HepG2 (cell line): ENCODE measurements at regions of chr1 and their contacts with region 1.

Region 1: DNA sequence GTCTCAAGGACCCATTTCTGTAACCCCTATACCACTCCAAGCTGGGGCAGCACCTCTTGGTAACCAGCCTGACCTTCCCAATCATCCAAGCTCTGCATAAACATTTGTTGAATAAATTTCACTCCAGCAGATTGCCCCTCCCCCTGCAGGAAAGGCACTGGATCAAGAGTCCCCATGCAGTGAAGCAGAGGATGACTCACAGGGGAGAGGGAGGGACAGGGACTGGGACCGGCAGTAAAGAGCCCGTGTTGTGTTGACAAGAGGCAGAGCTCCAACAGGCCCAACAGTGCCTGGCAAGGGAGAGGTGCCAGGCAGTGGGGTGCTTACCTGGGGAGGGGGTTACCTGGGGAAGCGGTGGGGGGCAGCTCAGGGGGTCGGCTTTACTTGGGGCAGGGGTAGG is 32.3 kb downstream of the SLC9A1 start:
- DNase-seq: peak; percentile 86
- ATAC-seq: peak; percentile 97
- H3K4me3 ChIP-seq: no peak overlapping the region
- H3K27ac ChIP-seq: no peak overlapping the region
- H3K4me1 ChIP-seq: peaks cover 14% of the 10 kb centered on the region
- H3K27me3 ChIP-seq: no peaks in the 10 kb centered on the region
- CTCF ChIP-seq: no peak
- EP300 ChIP-seq: no peak
- POLR2A ChIP-seq: no peak
- RAD21 ChIP-seq: no peak

Region 2: DNA sequence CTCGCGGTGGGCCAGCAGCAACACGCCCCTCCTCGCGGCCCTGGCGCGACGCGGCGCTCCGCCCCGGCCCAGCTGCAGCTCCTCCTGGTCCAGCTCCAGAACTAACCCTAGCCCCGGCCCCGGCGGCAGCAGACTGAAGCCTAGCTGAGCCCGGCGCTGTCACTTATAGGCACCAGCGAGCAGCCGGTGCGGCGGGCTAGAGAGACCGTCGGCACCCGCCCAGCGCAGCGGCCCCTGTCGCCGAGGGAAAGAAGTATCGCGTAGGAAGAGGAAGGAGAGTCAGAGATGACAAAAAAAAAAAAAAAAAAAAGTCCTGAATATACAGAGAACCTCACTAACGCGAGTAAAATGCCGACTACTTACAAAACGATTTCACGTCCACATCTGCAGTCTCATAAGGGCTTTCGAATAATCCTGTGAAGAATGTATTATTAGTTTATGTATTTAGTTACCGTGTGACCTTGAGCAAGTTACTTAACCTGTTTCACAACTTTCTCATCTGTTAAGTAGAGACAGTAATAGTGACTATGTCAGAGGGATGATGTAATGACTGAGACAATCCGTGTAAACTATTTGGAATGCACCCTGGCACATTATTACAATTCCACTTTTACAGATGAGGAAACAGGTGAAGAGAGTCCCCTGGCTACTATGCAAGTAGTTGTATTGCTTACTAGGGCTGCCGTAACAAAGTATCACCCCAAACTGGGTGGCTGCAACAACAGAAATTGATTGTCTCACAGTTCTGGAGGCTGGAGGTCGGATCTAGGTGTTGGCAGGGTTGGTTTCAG is 32.5 kb after region 1 on chr1 and contains the start of gene SLC9A1:
- CTCF ChIA-PET with region 1: no interaction called
- POLR2A ChIA-PET with region 1: interaction called, 10 read pairs
- in situ Hi-C with region 1: no loop called
- intact Hi-C with region 1: no loop called
- DNase-seq: peak; percentile 85
- ATAC-seq: peak; percentile 94
- H3K4me3 ChIP-seq: peak within 1 kb of the TSS; percentile 72 to 81 (median 79)
- H3K27ac ChIP-seq: peak within 1 kb of the TSS; percentile 41
- H3K4me1 ChIP-seq: peaks cover 47% of the 10 kb centered on the region
- H3K27me3 ChIP-seq: no peaks in the 10 kb centered on the region
- CTCF ChIP-seq: peak; percentile 90
- EP300 ChIP-seq: peak; percentile 36 to 62; a peak in 3 of 4 replicates
- POLR2A ChIP-seq: peak; percentile 99
- RAD21 ChIP-seq: peak; percentile 65
- total RNA-seq, gene SLC9A1: 2.7 and 2.9 TPM in 2 replicates

Region 3: GRCh38 chr1:27682351-27682944 is 559.8 kb after region 1 on chr1:
- CTCF ChIA-PET with region 1: no interaction called
- POLR2A ChIA-PET with region 1: no interaction called
- in situ Hi-C with region 1: no loop called
- intact Hi-C with region 1: no loop called
- DNase-seq: peak; percentile 79
- ATAC-seq: peak; percentile 46; the same call in 2 of the 3 replicates
- H3K4me3 ChIP-seq: peak overlapping the region in 1 of 3 experiments; percentile 13; a peak in 1 of 6 replicates
- H3K27ac ChIP-seq: peak overlapping the region; percentile 35
- H3K4me1 ChIP-seq: peaks cover 38% of the 10 kb centered on the region
- H3K27me3 ChIP-seq: peaks cover 2 to 15% of the 10 kb centered on the region in 2 experiments; a peak in 2 of 5 replicates
- CTCF ChIP-seq: no peak
- EP300 ChIP-seq: no peak
- POLR2A ChIP-seq: no peak
- RAD21 ChIP-seq: no peak